ENCODE measurements at regions of chr3 and their contacts with region 1.

Region 1: GRCh38 chr3:15064835-15065549 is at the start of gene MRPS25:
- DNase-seq: peak; percentile 87 to 90 (median 87)
- H3K4me3 ChIP-seq: peak within 1 kb of the TSS; percentile 68 to 94 (median 80)
- H3K4me3 Mint-ChIP-seq: peak within 1 kb of the TSS; percentile 96 to 97
- H3K27ac ChIP-seq: peak within 1 kb of the TSS; percentile 69 to 84
- H3K27ac Mint-ChIP-seq: peak within 1 kb of the TSS; percentile 90 to 97 (median 95)
- H3K4me1 ChIP-seq: peaks cover 20 to 25% of the 10 kb centered on the region in 2 donors
- H3K4me1 Mint-ChIP-seq: peaks cover 21% of the 10 kb centered on the region
- H3K27me3 ChIP-seq: no peaks in the 10 kb centered on the region
- H3K27me3 Mint-ChIP-seq: peaks cover 0 to 2% (median 0%) of the 10 kb centered on the region in 3 donors
- CTCF ChIP-seq: no peak
- polyA plus RNA-seq, gene MRPS25: 23.7 to 60.7 (median 24.6) TPM

Region 2: GRCh38 chr3:14640157-14640562 is 424.8 kb before region 1 on chr3:
- intact Hi-C with region 1: loop called in 1 of 2 experiments (anchors 10 kb)
- DNase-seq: no peak
- H3K4me3 ChIP-seq: no peak overlapping the region
- H3K4me3 Mint-ChIP-seq: peak overlapping the region in 1 of 2 donors; percentile 1
- H3K27ac ChIP-seq: no peak overlapping the region
- H3K27ac Mint-ChIP-seq: no peak overlapping the region
- H3K4me1 ChIP-seq: no peaks in the 10 kb centered on the region
- H3K4me1 Mint-ChIP-seq: no peaks in the 10 kb centered on the region
- H3K27me3 ChIP-seq: peaks cover 0 to 2% of the 10 kb centered on the region in 2 donors
- H3K27me3 Mint-ChIP-seq: peaks cover 4 to 20% (median 10%) of the 10 kb centered on the region in 3 donors
- CTCF ChIP-seq: no peak

Region 3: GRCh38 chr3:14651440-14652251 is 413.3 kb before region 1 on chr3 and contains the start of gene CCDC174:
- intact Hi-C with region 1: loop called (anchors 10 kb)
- DNase-seq: peak; percentile 99 to 100 (median 99)
- H3K4me3 ChIP-seq: peak within 1 kb of the TSS; percentile 88 to 93 (median 89)
- H3K4me3 Mint-ChIP-seq: peak within 1 kb of the TSS; percentile 94 to 97
- H3K27ac ChIP-seq: peak within 1 kb of the TSS; percentile 94 to 97
- H3K27ac Mint-ChIP-seq: peak within 1 kb of the TSS; percentile 97 to 99 (median 98)
- H3K4me1 ChIP-seq: peaks cover 21 to 39% of the 10 kb centered on the region in 2 donors
- H3K4me1 Mint-ChIP-seq: peaks cover 37% of the 10 kb centered on the region
- H3K27me3 ChIP-seq: no peaks in the 10 kb centered on the region
- H3K27me3 Mint-ChIP-seq: peaks cover 0 to 3% (median 2%) of the 10 kb centered on the region in 3 donors
- CTCF ChIP-seq: no peak
- polyA plus RNA-seq, gene CCDC174: 6.2 to 7.9 (median 7.4) TPM

Region 4: GRCh38 chr3:14959359-14959943 is 105.5 kb before region 1 on chr3:
- intact Hi-C with region 1: loop called in 1 of 2 experiments (anchors 10 kb)
- DNase-seq: no peak
- H3K4me3 ChIP-seq: no peak overlapping the region
- H3K4me3 Mint-ChIP-seq: peak overlapping the region; percentile 9 to 29
- H3K27ac ChIP-seq: peak overlapping the region in 1 of 2 donors; percentile 63
- H3K27ac Mint-ChIP-seq: peak overlapping the region in 6 of 7 donors; percentile 2 to 85 (median 37)
- H3K4me1 ChIP-seq: no peaks in the 10 kb centered on the region
- H3K4me1 Mint-ChIP-seq: peaks cover 21% of the 10 kb centered on the region
- H3K27me3 ChIP-seq: no peaks in the 10 kb centered on the region
- H3K27me3 Mint-ChIP-seq: no peaks in the 10 kb centered on the region
- CTCF ChIP-seq: no peak

Region 5: DNA sequence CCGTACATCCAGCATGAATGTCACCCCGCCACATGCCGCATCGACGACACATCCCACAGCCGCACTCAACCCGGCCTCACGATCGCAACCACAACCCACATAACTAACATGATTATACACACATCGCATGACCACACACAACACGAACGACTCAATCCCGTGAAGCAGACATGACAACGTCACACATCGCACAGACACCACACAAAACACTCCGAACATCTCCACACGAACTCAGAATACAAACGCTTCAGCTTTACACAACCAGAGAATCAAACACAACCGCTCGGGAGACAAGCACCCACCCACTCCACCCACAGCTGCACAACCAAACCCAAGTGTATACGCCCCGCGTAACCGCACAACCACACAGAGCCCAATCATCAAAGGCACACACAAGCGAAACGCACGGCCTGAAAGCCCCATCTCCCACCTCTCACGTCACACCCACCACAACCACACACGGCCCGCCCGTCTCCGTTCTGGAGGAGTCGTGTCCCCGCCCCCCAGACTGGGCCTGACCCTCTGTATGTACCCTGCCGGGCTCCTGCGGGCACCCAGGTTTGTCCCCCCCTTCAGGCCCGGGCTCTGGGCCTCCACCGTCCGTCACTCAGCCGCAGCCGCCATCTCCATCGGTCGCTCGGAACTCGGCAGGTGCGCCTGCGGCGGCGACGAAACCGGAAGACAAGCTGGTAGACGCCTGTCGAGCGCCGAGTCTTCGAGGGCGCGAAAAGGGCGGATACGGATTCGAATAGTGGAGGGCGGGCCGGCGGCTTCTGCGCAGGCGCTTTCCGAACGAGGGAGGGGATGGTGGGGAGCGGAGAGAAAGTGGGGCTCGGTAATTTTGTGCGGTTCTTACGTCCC is 33.7 kb after region 1 on chr3 and contains the start of gene RBSN:
- intact Hi-C with region 1: no loop called
- DNase-seq: peak; percentile 90 to 91 (median 90)
- H3K4me3 ChIP-seq: peak within 1 kb of the TSS; percentile 65 to 88 (median 84)
- H3K4me3 Mint-ChIP-seq: peak within 1 kb of the TSS; percentile 88 to 100
- H3K27ac ChIP-seq: peak within 1 kb of the TSS; percentile 73 to 94
- H3K27ac Mint-ChIP-seq: peak within 1 kb of the TSS; percentile 82 to 96 (median 91)
- H3K4me1 ChIP-seq: peaks cover 34 to 39% of the 10 kb centered on the region in 2 donors
- H3K4me1 Mint-ChIP-seq: peaks cover 41% of the 10 kb centered on the region
- H3K27me3 ChIP-seq: no peaks in the 10 kb centered on the region
- H3K27me3 Mint-ChIP-seq: no peaks in the 10 kb centered on the region
- CTCF ChIP-seq: no peak
- polyA plus RNA-seq, gene RBSN: 6.7 to 10.1 (median 8.1) TPM

Measured in CD14-positive monocyte (primary cell).